Dendritic cell treated with granulocyte-macrophage colony-stimulating factor and Interleukin-4, amounts not matched to agents 40 ng/mL and 50 ng/mL, for 4 days (primary cell): ENCODE measurements at regions of chr19 and their contacts with region 1.

Region 1: GRCh38 chr19:19145684-19146608 is 7.7 kb upstream of the TMEM161A start:
- H3K4me3 Mint-ChIP-seq: no peak overlapping the region
- H3K27ac Mint-ChIP-seq: no peak overlapping the region
- H3K4me1 Mint-ChIP-seq: peaks cover 5% of the 10 kb centered on the region
- H3K27me3 Mint-ChIP-seq: peaks cover 1% of the 10 kb centered on the region

Region 2: GRCh38 chr19:19170053-19170872 is 24.3 kb after region 1 on chr19 and contains the start of gene MEF2B:
- intact Hi-C with region 1: loop called (anchors 1 kb)
- H3K4me3 Mint-ChIP-seq: peak within 1 kb of the TSS; percentile 52
- H3K27ac Mint-ChIP-seq: no peak within 1 kb of the TSS
- H3K4me1 Mint-ChIP-seq: peaks cover 27% of the 10 kb centered on the region
- H3K27me3 Mint-ChIP-seq: peaks cover 23% of the 10 kb centered on the region

Region 3: DNA sequence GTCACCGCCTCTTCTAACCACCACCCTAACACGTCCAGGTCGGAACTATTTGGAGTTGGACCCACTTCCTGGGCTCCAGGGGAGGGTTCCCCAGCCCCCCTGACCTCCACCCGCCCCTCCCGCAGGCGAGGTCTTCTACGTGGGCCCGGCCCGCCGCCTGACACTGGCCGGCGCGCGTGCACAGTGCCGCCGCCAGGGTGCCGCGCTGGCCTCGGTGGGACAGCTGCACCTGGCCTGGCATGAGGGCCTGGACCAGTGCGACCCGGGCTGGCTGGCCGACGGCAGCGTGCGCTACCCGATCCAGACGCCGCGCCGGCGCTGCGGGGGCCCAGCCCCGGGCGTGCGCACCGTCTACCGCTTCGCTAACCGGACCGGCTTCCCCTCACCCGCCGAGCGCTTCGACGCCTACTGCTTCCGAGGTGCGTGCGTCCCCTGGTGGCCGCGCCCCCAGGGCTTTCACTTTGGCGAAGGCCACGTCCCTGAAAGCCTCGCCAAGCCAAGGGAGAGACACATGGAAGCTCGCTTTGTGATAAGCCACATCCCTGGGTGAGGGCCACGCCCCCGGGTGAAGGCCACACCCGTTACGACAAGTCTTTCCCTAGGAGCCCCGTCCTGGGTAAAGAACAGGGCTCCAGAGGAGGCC is 79.0 kb after region 1 on chr19:
- intact Hi-C with region 1: loop called (anchors 1 kb)
- H3K4me3 Mint-ChIP-seq: peak overlapping the region; percentile 72
- H3K27ac Mint-ChIP-seq: peak overlapping the region; percentile 30
- H3K4me1 Mint-ChIP-seq: peaks cover 11% of the 10 kb centered on the region
- H3K27me3 Mint-ChIP-seq: peaks cover 57% of the 10 kb centered on the region